Panc1 (cell line): ENCODE measurements at regions of chr18 and their contacts with region 1.

Region 1: DNA sequence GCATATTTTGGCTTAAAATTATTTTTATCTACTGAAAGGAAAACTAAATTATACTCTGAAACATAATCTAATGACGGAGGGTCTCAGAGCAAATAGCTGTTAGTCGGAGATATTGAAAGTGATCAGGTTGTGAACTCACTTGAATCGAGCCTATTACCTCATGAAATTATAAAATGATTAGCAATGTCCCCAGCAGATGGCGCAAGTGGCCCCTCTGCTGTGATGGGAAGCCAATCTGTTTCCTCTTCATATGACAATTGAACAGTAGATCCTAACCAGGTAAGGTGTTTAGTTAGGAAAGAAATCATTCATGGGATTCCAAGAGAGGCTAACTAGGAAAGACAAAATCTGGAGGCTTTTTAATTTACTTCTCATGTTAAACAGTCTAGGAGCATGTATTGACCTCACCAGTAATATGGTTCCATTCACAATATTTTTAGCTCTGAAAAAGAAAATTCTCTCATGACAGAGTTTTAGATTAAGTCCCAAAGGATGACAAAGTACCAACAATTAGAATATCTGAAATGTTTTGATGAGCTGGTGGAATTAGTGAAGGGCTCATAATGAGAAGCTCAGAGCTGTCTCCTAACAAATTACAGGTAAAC is 29.9 kb upstream of the MPPE1 start:
- DNase-seq: peak; percentile 48
- ATAC-seq: peak; percentile 90
- H3K4me3 ChIP-seq: no peak overlapping the region
- H3K27ac ChIP-seq: no peak overlapping the region
- H3K4me1 ChIP-seq: no peaks in the 10 kb centered on the region
- H3K27me3 ChIP-seq: no peaks in the 10 kb centered on the region
- CTCF ChIP-seq: peak; percentile 82

Region 2: DNA sequence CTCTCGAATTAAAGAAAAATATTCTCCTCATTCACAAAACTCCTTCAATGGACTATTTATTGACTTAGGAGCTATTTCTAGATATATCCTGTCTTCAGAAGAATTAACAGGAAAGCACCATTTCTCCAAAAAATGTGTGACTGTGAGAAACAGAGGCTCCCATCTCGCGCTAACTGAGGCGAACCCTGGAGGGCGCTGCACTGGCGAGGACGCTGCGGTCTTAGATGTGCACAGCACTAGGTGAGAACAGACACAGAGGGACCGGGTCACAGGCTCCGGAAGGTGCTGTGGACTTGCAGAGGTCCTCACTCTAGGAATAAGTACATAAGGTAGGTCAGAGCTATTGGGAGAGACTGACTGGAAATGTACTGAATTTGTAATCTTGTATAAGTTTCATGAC is 558.3 kb before region 1 on chr18:
- CTCF ChIA-PET with region 1: no interaction called
- POLR2A ChIA-PET with region 1: no interaction called
- in situ Hi-C with region 1: no loop called
- intact Hi-C with region 1: no loop called
- DNase-seq: no peak
- ATAC-seq: no peak
- H3K4me3 ChIP-seq: no peak overlapping the region
- H3K27ac ChIP-seq: no peak overlapping the region
- H3K4me1 ChIP-seq: no peaks in the 10 kb centered on the region
- H3K27me3 ChIP-seq: no peaks in the 10 kb centered on the region
- CTCF ChIP-seq: no peak

Region 3: DNA sequence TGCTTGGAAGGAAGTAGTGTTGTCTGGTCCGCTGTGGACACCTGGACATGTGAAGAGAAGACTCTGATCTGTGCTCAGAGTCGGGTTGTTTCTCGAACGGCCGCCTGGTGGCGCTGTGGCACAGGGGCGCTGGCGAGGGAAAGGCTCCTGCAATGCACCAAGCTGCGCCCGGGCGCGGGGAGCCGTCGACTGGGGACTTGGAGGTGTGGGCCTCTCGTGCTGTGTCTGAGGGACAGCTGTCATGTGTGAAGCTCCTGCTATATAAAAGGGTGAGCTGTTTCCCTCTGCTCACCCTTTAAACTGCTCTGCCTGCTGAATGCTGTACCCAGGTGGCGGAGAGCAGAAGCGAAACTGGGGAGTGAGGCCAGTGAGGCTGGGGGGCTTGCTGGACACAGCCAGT is 204.9 kb before region 1 on chr18:
- CTCF ChIA-PET with region 1: no interaction called
- POLR2A ChIA-PET with region 1: no interaction called
- in situ Hi-C with region 1: no loop called
- intact Hi-C with region 1: no loop called
- DNase-seq: peak; percentile 17
- ATAC-seq: peak; percentile 93
- H3K4me3 ChIP-seq: peak overlapping the region; percentile 11 to 42; a peak in 3 of 4 replicates
- H3K27ac ChIP-seq: no peak overlapping the region
- H3K4me1 ChIP-seq: no peaks in the 10 kb centered on the region; the same call in 1 of the 2 replicates
- H3K27me3 ChIP-seq: peaks cover 16% of the 10 kb centered on the region
- CTCF ChIP-seq: peak; percentile 95

Region 4: DNA sequence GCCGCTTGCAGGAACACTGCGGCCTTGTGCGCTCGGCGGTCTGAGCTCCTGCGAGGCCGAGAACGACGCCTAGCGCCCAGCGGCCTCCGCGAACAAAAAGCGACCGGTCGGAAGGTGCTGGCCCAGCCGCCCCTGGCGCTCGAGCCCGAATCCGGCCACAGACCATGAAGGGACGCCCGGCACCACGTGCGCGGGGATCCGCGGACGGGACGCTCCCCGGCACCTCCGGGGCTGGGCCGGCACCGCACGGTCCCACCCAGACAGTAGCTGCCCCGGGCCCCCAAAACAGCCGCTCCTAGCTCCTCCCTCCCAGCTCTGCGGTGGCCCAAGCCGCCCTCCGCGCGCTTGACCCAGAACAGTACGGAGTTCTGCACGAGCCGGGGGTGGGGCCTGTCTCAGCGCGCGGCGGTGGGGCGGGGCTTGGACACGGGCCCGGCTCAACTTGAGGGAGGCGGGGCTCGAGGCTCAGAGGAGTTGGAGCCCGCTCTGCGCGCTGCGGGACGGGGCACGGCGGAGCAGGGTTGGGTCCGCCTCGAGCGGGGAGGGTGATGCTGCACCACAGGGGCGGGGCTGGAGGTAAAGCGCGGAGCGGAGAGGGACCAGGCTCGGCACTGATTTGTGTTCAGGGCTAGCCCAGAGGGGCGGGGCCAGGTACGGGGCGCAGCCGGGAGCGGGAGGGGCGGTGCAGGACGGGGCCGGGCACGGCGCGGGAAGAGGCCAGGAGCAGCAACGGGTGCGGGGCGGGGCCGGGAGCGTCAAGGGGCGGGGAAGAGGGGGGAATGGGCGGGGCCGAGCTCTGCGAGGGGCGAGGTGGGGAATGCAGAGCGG is 42.8 kb after region 1 on chr18:
- CTCF ChIA-PET with region 1: interaction called, 16 read pairs
- POLR2A ChIA-PET with region 1: interaction called, 3 read pairs
- in situ Hi-C with region 1: no loop called
- intact Hi-C with region 1: no loop called
- DNase-seq: peak; percentile 82
- ATAC-seq: peak; percentile 95
- H3K4me3 ChIP-seq: peak overlapping the region; percentile 55 to 57
- H3K27ac ChIP-seq: peak overlapping the region; percentile 95
- H3K4me1 ChIP-seq: peaks cover 15% of the 10 kb centered on the region
- H3K27me3 ChIP-seq: no peaks in the 10 kb centered on the region
- CTCF ChIP-seq: no peak

Region 5: DNA sequence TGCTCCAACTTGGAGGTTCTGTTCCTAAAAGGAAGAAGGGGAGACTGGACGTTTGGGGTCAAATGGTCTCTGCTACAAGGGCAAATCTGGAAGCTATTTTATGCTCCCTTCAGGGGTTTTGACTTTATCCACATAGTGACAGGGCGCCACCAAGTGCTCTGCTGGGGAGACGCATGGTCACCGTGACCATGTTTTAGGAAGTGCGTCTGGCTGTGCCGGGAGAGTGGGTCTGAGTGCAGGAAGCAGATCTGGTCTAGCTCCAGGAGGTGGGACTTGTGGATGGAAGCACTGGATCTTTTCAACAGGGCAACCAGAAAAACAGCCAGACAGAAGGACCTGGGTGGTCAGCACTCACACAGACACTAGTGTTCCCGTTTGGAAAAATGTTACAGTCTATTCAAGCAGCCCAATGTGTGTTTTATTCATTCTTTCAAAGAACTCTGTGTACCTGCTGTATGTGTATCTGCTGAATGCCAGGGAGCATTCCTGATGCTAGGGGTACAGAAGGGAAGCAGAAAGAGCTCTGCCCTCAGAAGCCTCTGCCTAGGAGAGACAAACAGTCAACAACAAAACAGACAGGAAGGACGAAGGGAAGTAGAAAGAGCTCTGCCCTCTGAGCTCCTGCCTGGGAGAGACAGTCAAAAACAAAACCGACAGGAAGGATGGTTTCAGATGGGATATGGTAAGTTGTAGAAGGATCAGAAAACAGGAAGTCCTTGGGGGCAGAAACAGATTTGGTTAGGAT is 57.6 kb after region 1 on chr18:
- CTCF ChIA-PET with region 1: interaction called, 35 read pairs
- POLR2A ChIA-PET with region 1: no interaction called
- in situ Hi-C with region 1: no loop called
- intact Hi-C with region 1: loop called (anchors 2 kb)
- DNase-seq: no peak
- ATAC-seq: peak; percentile 93
- H3K4me3 ChIP-seq: no peak overlapping the region
- H3K27ac ChIP-seq: peak overlapping the region; percentile 24; the same call in 1 of the 2 replicates
- H3K4me1 ChIP-seq: peaks cover 8% of the 10 kb centered on the region; the same call in 1 of the 2 replicates
- H3K27me3 ChIP-seq: no peaks in the 10 kb centered on the region
- CTCF ChIP-seq: peak; percentile 89

Region 6: GRCh38 chr18:12038639-12039417 is 100.9 kb after region 1 on chr18:
- CTCF ChIA-PET with region 1: interaction called, 13 read pairs
- POLR2A ChIA-PET with region 1: no interaction called
- in situ Hi-C with region 1: no loop called
- intact Hi-C with region 1: loop called (anchors 1 kb)
- DNase-seq: peak; percentile 57
- ATAC-seq: peak; percentile 98
- H3K4me3 ChIP-seq: peak overlapping the region; percentile 49 to 53
- H3K27ac ChIP-seq: peak overlapping the region; percentile 63; the same call in 1 of the 2 replicates
- H3K4me1 ChIP-seq: no peaks in the 10 kb centered on the region
- H3K27me3 ChIP-seq: no peaks in the 10 kb centered on the region
- CTCF ChIP-seq: peak; percentile 98

Region 7: GRCh38 chr18:12049978-12050811 is 112.2 kb after region 1 on chr18:
- CTCF ChIA-PET with region 1: no interaction called
- POLR2A ChIA-PET with region 1: no interaction called
- in situ Hi-C with region 1: no loop called
- intact Hi-C with region 1: no loop called
- DNase-seq: no peak
- ATAC-seq: no peak
- H3K4me3 ChIP-seq: no peak overlapping the region
- H3K27ac ChIP-seq: no peak overlapping the region
- H3K4me1 ChIP-seq: no peaks in the 10 kb centered on the region
- H3K27me3 ChIP-seq: no peaks in the 10 kb centered on the region
- CTCF ChIP-seq: no peak